Right cardiac atrium (tissue), 5 donors: ENCODE measurements at regions of chr12 and their contacts with region 1.

Region 1: GRCh38 chr12:49358483-49359141 is 8.7 kb upstream of the SPATS2 start:
- DNase-seq: no peak
- ATAC-seq: peak; percentile 69 to 87
- H3K4me3 ChIP-seq: no peak overlapping the region
- H3K27ac ChIP-seq: no peak overlapping the region
- H3K4me1 ChIP-seq: no peaks in the 10 kb centered on the region
- H3K27me3 ChIP-seq: no peaks in the 10 kb centered on the region

Region 2: GRCh38 chr12:48758221-48758620 is 600.4 kb before region 1 on chr12:
- intact Hi-C with region 1: no loop called
- DNase-seq: no peak
- ATAC-seq: no peak
- H3K4me3 ChIP-seq: no peak overlapping the region
- H3K27ac ChIP-seq: no peak overlapping the region
- H3K4me1 ChIP-seq: peaks cover 1% of the 10 kb centered on the region
- H3K27me3 ChIP-seq: no peaks in the 10 kb centered on the region

Region 3: GRCh38 chr12:49515266-49515665 is 156.7 kb after region 1 on chr12:
- intact Hi-C with region 1: loop called (anchors 2 to 5 kb)
- DNase-seq: no peak
- ATAC-seq: no peak
- H3K4me3 ChIP-seq: no peak overlapping the region
- H3K27ac ChIP-seq: no peak overlapping the region
- H3K4me1 ChIP-seq: no peaks in the 10 kb centered on the region
- H3K27me3 ChIP-seq: no peaks in the 10 kb centered on the region

Region 4: DNA sequence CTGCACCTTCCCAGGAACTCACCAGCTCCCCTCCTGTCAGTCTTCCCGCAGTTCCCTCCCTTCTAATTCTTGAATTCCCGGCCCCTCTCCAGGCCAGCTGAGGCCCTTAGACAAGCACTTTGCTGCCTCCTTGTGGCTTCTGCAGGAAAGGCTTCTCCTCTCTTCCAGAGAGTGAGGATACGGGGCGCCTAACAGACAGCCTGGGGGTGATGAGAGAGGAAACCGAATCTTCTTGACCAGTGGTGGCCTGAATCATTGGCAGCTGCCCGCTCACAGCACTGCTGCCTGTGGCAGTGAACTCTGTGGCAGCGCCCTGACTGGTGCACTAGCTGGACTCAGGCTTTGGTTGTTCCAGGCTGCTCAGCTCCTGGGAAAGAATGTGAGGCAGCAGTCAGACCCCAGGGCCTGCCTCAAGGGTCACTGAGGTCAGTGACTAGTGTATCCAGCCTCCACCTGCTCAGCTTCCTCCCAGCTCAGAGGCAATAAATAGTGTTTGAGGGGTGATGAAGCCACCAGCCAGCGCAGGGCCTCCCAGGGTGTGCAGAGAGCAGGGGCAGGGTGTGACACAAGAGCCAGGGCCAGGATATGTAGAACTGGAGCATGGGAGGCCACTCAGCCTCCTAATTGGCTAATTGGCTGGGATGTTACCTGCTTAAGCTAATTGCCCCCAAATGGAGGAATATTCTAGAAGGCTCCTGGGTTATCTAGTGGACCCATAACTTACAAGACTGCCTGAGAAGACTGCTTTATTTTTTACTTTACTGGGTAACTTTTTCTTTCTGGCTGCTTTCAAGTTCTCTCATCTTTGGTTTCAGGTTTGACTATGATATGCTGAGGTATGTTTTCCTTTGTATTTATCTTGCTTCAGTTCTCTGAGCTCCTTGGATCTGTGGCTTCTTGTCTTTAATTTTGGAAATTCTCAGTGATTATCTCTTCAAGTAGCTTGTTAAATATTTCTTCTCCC is 222.2 kb after region 1 on chr12:
- intact Hi-C with region 1: loop called in 1 of 4 experiments (anchors 10 kb)
- DNase-seq: peak; percentile 76 to 89 (median 83)
- ATAC-seq: peak; percentile 68 to 77
- H3K4me3 ChIP-seq: no peak overlapping the region
- H3K27ac ChIP-seq: peak overlapping the region; percentile 42
- H3K4me1 ChIP-seq: peaks cover 12% of the 10 kb centered on the region
- H3K27me3 ChIP-seq: no peaks in the 10 kb centered on the region